A673 (cell line): ENCODE measurements at regions of chr4 and their contacts with region 1.

Region 1: GRCh38 chr4:40149960-40150385 is 46.9 kb upstream of the RHOH start:
- DNase-seq: peak; percentile 91
- H3K4me3 ChIP-seq: no peak overlapping the region
- H3K27ac ChIP-seq: no peak overlapping the region
- H3K4me1 ChIP-seq: peaks cover 9% of the 10 kb centered on the region
- H3K27me3 ChIP-seq: no peaks in the 10 kb centered on the region
- CTCF ChIP-seq: peak; percentile 85

Region 2: GRCh38 chr4:40179360-40179759 is 29.4 kb after region 1 on chr4:
- CTCF ChIA-PET with region 1: no interaction called
- POLR2A ChIA-PET with region 1: interaction called, 10 read pairs
- intact Hi-C with region 1: no loop called
- DNase-seq: no peak
- H3K4me3 ChIP-seq: no peak overlapping the region
- H3K27ac ChIP-seq: peak overlapping the region; percentile 80
- H3K4me1 ChIP-seq: peaks cover 42% of the 10 kb centered on the region
- H3K27me3 ChIP-seq: no peaks in the 10 kb centered on the region
- CTCF ChIP-seq: no peak

Region 3: GRCh38 chr4:40199999-40200874 is 50.3 kb after region 1 on chr4:
- CTCF ChIA-PET with region 1: no interaction called
- POLR2A ChIA-PET with region 1: no interaction called
- intact Hi-C with region 1: loop called (anchors 5 kb)
- DNase-seq: peak; percentile 73
- H3K4me3 ChIP-seq: peak overlapping the region; percentile 78
- H3K27ac ChIP-seq: peak overlapping the region; percentile 97
- H3K4me1 ChIP-seq: peaks cover 50% of the 10 kb centered on the region
- H3K27me3 ChIP-seq: no peaks in the 10 kb centered on the region
- CTCF ChIP-seq: no peak

Region 4: DNA sequence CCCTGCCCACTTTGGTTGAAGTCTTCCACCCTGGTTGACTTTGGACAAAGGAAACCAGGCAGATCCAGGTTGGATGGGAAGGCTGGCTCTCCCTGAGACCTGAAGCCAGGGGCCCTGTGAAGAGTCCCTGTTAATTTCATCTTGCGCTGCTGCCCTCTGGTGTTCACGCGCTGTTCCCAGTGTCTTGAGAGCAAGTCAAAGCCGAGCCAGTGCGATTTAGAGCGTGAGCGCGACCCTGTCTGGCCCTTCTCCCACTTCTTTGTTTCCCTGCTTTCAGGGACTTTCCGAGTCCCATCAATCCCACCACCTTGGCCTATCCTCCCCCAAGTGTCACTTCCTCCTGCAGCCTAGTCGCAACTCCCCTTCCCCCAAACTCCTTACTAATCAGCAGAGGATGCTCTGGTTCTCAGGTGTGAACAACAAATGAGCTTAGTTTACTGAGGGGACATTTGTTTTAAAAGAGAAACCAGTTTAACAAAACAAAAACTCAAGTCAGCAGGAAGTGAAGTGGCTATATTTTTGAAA is 159.3 kb after region 1 on chr4:
- CTCF ChIA-PET with region 1: no interaction called
- POLR2A ChIA-PET with region 1: no interaction called
- intact Hi-C with region 1: loop called (anchors 1 kb)
- DNase-seq: peak; percentile 94
- H3K4me3 ChIP-seq: peak overlapping the region; percentile 18
- H3K27ac ChIP-seq: no peak overlapping the region
- H3K4me1 ChIP-seq: peaks cover 21% of the 10 kb centered on the region
- H3K27me3 ChIP-seq: no peaks in the 10 kb centered on the region
- CTCF ChIP-seq: peak; percentile 91